ENCODE measurements at regions of chr12 and their contacts with region 1.

Region 1: GRCh38 chr12:8108808-8109398 is 14.5 kb upstream of the CLEC4A start:
- DNase-seq: peak; percentile 85
- ATAC-seq: peak; percentile 61
- H3K4me3 Mint-ChIP-seq: no peak overlapping the region
- H3K27ac Mint-ChIP-seq: no peak overlapping the region
- H3K4me1 Mint-ChIP-seq: no peaks in the 10 kb centered on the region
- H3K27me3 Mint-ChIP-seq: no peaks in the 10 kb centered on the region; the same call in 1 of the 2 replicates
- CTCF ChIP-seq: peak; percentile 85

Region 2: DNA sequence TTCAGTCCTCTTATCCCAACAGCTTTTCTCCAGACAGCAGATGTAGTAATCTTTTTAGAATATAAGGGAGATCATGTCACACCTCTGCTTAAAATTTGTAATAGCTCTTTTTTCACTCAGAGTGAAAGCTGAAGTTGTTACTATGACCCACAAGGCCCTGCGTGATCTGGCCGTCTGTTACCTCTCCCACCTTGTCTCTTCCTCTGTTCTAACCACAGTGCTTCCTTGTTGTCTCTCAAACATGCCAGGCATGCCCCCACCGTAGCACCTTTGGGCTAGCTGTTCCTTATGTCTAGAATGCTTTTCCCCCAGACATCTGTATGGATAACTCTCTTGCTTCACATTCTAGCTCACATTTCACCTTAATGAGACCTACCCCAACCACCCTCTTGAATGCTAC is 20.3 kb before region 1 on chr12:
- CTCF ChIA-PET with region 1: no interaction called
- POLR2A ChIA-PET with region 1: no interaction called
- DNase-seq: no peak
- ATAC-seq: no peak
- H3K4me3 Mint-ChIP-seq: no peak overlapping the region
- H3K27ac Mint-ChIP-seq: no peak overlapping the region
- H3K4me1 Mint-ChIP-seq: 0 out of 2 replicates have a peak, but pooled peaks cover 4% of the 10 kb centered on the region
- H3K27me3 Mint-ChIP-seq: no peaks in the 10 kb centered on the region
- CTCF ChIP-seq: no peak

Region 3: GRCh38 chr12:8226355-8226754 is 117.5 kb after region 1 on chr12:
- CTCF ChIA-PET with region 1: interaction called, 20 read pairs
- POLR2A ChIA-PET with region 1: no interaction called
- DNase-seq: no peak
- ATAC-seq: no peak
- H3K4me3 Mint-ChIP-seq: no peak overlapping the region
- H3K27ac Mint-ChIP-seq: no peak overlapping the region
- H3K4me1 Mint-ChIP-seq: peaks cover 8% of the 10 kb centered on the region
- H3K27me3 Mint-ChIP-seq: no peaks in the 10 kb centered on the region
- CTCF ChIP-seq: no peak